ENCODE measurements at regions of chr3 and their contacts with region 1.

Region 1: DNA sequence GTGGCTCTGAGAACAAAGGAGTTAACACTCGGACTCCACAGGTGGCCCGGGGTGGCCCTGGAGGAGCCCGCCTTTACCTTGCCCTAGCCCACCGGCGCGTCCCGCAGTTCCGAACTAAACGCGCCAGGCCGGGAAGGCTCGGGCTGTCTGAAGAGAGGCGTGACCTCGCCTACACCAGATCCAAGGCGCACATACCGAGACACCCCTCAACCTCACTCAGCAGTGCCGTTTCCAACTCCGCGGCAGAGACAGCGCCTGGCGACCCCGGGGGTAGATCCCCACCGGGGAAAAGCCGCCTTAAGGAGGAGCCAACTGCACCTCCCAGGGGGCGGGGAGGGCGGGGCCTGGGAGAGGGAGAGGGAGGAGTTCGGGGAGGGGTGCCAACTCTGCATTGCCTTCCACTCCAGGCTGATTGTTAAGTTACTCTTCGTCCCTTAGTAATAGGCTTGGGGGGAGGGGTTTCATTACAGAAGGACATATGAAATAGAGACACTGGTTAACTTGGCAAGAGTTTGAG is at the start of gene DLG1:
- DNase-seq: peak; percentile 92
- ATAC-seq: peak; percentile 81
- H3K4me3 ChIP-seq: peak within 1 kb of the TSS; percentile 81 to 82
- H3K27ac ChIP-seq: peak within 1 kb of the TSS; percentile 87
- H3K4me1 ChIP-seq: peaks cover 11 to 17% of the 10 kb centered on the region in 2 experiments; a peak in 3 of 4 replicates
- H3K27me3 ChIP-seq: no peaks in the 10 kb centered on the region
- CTCF ChIP-seq: no peak
- POLR2A ChIP-seq: peak; percentile 21
- RAD21 ChIP-seq: no peak
- total RNA-seq, gene DLG1: 89.8 TPM

Region 2: GRCh38 chr3:197093871-197094270 is 204.5 kb before region 1 on chr3:
- CTCF ChIA-PET with region 1: no interaction called
- POLR2A ChIA-PET with region 1: no interaction called
- RAD21 ChIA-PET with region 1: no interaction called
- intact Hi-C with region 1: no loop called
- DNase-seq: no peak
- ATAC-seq: no peak
- H3K4me3 ChIP-seq: no peak overlapping the region
- H3K27ac ChIP-seq: no peak overlapping the region
- H3K4me1 ChIP-seq: no peaks in the 10 kb centered on the region
- H3K27me3 ChIP-seq: no peaks in the 10 kb centered on the region
- CTCF ChIP-seq: no peak
- POLR2A ChIP-seq: no peak
- RAD21 ChIP-seq: no peak

Region 3: DNA sequence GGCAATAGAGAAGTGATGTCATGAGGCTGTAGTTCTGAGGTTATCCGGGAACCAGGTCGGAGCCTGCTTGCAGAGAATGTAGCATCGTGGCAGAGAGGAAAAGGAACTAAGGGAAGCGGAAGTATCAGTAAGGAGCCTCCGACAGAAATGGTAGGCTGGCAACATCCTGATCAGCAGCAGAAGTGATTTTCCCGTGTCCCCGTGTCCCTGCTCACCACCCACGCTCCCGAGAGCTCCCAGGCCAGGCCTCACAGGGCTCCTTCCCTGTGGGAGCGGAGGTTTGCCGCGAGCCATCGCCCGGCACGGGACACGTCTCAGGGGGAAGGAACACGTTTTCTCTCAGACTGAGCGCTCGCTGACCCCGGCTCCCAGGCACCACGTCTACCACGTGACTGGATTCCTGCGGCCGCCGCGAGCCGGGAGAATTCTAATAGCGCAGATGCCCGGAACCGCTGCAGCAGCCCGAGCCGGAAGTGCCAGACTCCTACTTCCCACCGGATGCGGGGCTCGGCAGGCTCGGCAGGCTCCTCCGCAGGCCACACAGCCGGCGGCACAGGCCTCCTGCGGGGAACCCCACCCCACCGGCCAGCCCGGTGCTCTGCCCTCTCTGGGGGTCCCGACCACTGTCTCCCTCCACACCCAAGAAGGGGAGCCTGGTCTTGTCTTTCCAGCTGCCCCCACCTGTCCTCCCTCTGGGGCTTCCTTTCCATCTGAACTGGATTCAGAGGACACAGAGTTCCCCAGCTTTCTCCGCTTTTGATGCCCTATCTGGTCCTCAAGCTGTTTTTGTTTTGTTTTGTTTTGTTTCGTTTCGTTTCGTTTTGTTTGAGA is 158.1 kb after region 1 on chr3:
- CTCF ChIA-PET with region 1: no interaction called
- POLR2A ChIA-PET with region 1: interaction called, 3 read pairs
- RAD21 ChIA-PET with region 1: interaction called, 3 to 4 read pairs
- intact Hi-C with region 1: loop called (anchors 5 kb)
- DNase-seq: peak; percentile 54
- ATAC-seq: peak; percentile 87
- H3K4me3 ChIP-seq: peak overlapping the region; percentile 68 to 81
- H3K27ac ChIP-seq: peak overlapping the region; percentile 72
- H3K4me1 ChIP-seq: peaks cover 4 to 27% of the 10 kb centered on the region in 2 experiments; a peak in 1 of 4 replicates
- H3K27me3 ChIP-seq: no peaks in the 10 kb centered on the region
- CTCF ChIP-seq: no peak
- POLR2A ChIP-seq: peak; percentile 68
- RAD21 ChIP-seq: peak; percentile 36

Measured in HCT116 (cell line).